Dorsolateral prefrontal cortex (tissue), 120 donors: ENCODE measurements at regions of chr15 and their contacts with region 1.

Region 1: DNA sequence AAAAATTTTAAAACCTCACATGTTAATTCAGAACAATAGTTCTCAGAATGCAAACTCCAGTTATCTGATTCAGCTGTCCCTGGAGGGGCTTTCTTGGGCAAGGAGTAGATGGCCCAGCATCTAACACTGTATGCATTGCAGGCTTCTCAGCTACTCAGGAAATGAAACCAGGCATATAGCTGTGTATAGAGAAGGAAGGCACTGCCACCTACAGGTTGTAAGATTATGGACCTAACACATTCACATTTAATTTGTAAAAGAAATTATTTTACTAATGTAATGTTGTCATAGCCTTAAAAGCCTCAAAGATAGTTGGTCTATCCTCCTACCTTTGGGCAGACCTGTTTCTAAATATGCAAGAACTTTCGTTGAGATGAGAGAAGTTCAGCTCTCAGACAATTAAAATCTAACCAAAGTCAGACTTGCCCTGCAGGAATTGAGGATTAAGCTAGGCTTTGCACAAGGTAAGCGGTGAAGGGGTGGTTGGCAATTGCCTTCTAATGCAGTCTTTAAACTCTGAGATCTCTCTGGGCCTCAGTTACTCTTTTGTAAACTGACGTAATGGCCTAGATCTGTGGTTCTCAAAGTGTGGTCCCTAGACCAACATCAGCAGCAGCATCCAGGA is 132.8 kb upstream of the SLC24A5 start:
- DNase-seq: peak in 2 of 10 donors; percentile 19 to 32
- H3K4me3 ChIP-seq: peak overlapping the region in 3 of 59 donors; percentile 6 to 13 (median 9)
- H3K27ac ChIP-seq: peak overlapping the region in 5 of 59 donors; percentile 2 to 45 (median 21)
- H3K27me3 ChIP-seq: no peaks in the 10 kb centered on the region
- CTCF ChIP-seq: peak; percentile 65 to 96 (median 83)

Region 2: GRCh38 chr15:47196057-47196456 is 792.0 kb before region 1 on chr15:
- intact Hi-C with region 1: loop called (anchors 1 to 5 kb)
- DNase-seq: peak; percentile 55 to 86 (median 78)
- H3K4me3 ChIP-seq: peak overlapping the region in 1 of 59 donors; percentile 11
- H3K27ac ChIP-seq: no peak overlapping the region
- H3K27me3 ChIP-seq: peaks cover 0 to 4% (median 0%) of the 10 kb centered on the region in 45 donors
- CTCF ChIP-seq: peak; percentile 44 to 95 (median 87)

Region 3: DNA sequence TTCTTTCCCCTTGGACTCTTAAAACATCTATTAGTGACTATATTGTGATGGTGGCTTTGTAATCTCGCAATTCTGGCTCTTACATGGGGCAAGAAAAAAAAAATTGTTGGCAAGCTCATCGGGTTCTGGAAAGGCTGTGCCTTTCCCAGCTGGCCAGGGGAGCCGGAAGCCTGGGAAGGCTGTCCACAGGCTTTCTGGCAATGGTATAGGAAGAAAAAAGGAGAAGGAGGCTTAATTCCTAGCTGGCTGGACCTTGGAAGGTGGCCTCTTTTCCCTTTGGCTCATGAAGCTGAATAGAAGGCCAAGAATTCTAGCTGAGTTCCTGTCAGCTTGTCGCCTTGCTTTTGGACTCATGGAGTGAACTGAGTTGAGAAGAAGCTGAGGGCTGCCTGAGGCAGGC is 514.2 kb before region 1 on chr15:
- intact Hi-C with region 1: loop called in 1 of 2 experiments (anchors 2 kb)
- DNase-seq: peak in 3 of 10 donors; percentile 9 to 48 (median 32)
- H3K4me3 ChIP-seq: no peak overlapping the region
- H3K27ac ChIP-seq: peak overlapping the region in 2 of 59 donors; percentile 14 to 27
- H3K27me3 ChIP-seq: no peaks in the 10 kb centered on the region
- CTCF ChIP-seq: no peak

Region 4: GRCh38 chr15:47551079-47551478 is 436.9 kb before region 1 on chr15:
- intact Hi-C with region 1: loop called in 1 of 2 experiments (anchors 5 kb)
- DNase-seq: no peak
- H3K4me3 ChIP-seq: no peak overlapping the region
- H3K27ac ChIP-seq: no peak overlapping the region
- H3K27me3 ChIP-seq: no peaks in the 10 kb centered on the region
- CTCF ChIP-seq: peak in 20 of 56 donors; percentile 8 to 39 (median 28)

Region 5: DNA sequence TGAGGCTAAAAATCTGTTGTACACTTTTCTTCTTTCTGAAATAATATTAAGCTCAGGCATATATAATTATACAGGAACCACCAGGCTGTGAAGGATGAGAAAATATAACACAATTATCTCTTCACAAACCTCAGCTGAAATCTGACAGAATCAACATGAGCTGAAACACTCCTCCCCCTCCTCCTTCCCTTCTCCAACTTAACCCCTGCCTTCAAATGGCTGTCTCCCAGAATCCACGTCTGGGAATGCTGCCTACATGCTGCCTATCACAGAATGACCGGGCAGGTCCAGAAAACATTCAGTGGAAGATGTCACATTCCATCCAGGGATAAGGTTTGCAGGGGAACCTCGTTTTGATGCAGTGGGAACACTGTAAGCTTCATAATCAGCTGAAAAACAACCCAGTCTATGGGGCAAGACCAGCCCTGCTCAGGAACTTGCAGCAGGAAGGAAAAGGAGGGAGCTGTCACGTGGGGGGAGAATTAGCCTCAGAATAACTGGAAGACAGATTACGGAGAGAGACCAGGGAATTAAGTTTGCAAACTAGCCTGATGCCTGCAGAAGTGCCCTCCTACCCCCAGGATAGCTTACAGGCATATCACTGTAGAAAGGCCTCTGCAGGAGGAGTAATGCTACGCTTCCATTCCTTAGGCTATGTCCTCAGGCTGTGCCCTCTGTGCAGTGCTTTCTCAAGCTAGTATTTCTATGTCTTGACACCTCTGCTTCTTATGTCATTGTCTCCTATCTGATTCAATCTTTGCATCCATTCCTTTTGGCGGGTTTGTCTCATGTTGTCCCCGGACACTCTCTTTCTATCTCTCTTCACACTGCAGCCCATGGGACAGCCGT is 314.6 kb before region 1 on chr15:
- intact Hi-C with region 1: no loop called
- DNase-seq: no peak
- H3K4me3 ChIP-seq: no peak overlapping the region
- H3K27ac ChIP-seq: no peak overlapping the region
- H3K27me3 ChIP-seq: no peaks in the 10 kb centered on the region
- CTCF ChIP-seq: no peak

Region 6: DNA sequence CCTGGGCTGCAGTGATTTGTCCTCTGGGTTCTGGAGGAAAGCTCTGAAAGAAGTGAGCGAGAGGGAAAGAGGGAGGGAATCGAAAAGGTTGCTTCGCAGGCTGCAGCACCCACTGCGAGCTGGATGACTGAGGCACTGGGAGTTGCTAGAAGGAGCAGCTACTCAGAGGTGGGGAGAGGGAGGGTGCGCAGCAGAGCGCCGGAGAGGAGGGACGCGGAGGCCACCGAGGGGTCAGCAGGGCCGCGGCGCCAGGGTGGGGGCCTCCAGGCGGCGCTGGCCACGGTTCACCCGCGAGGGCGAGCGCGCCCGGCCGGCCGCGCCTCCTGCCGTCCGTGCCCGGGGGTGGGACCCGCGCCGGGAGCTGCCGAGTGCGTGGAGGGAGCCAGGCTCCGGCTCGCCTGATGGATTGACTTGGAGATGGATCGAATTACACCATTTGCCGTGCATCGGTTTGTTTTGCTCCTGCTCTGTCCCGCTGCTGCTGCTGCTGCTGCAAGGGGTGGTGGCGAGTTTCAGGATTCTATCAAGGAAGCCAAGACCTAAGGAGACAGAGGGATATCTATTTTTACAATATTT is 270.9 kb before region 1 on chr15 and contains the start of gene SEMA6D:
- intact Hi-C with region 1: loop called (anchors 5 kb)
- DNase-seq: peak; percentile 24 to 87 (median 78)
- H3K4me3 ChIP-seq: peak within 1 kb of the TSS; percentile 59 to 97 (median 85)
- H3K27ac ChIP-seq: peak within 1 kb of the TSS; percentile 85 to 98 (median 96)
- H3K27me3 ChIP-seq: no peaks in the 10 kb centered on the region
- CTCF ChIP-seq: peak in 49 of 56 donors; percentile 5 to 75 (median 51)
- total RNA-seq, gene SEMA6D: 43.1 to 116 (median 68.1) TPM

Region 7: GRCh38 chr15:48052946-48053345 is 64.9 kb after region 1 on chr15:
- intact Hi-C with region 1: no loop called
- DNase-seq: no peak
- H3K4me3 ChIP-seq: no peak overlapping the region
- H3K27ac ChIP-seq: no peak overlapping the region
- H3K27me3 ChIP-seq: no peaks in the 10 kb centered on the region
- CTCF ChIP-seq: no peak

Region 8: GRCh38 chr15:48285329-48286214 is 297.6 kb after region 1 on chr15:
- intact Hi-C with region 1: loop called in 1 of 2 experiments (anchors 10 kb)
- DNase-seq: peak in 4 of 10 donors; percentile 10 to 53 (median 41)
- H3K4me3 ChIP-seq: peak overlapping the region in 57 of 59 donors; percentile 3 to 68 (median 49)
- H3K27ac ChIP-seq: peak overlapping the region in 1 of 59 donors; percentile 30
- H3K27me3 ChIP-seq: no peaks in the 10 kb centered on the region
- CTCF ChIP-seq: peak; percentile 62 to 95 (median 82)